Mammary epithelial cell (primary cell): ENCODE measurements at regions of chr14 and their contacts with region 1.

Region 1: GRCh38 chr14:35229495-35230089 is 62.6 kb upstream of the PSMA6 start:
- DNase-seq: no peak
- H3K4me3 ChIP-seq: no peak overlapping the region
- H3K27ac ChIP-seq: no peak overlapping the region
- H3K4me1 ChIP-seq: peaks cover 5% of the 10 kb centered on the region
- H3K27me3 ChIP-seq: no peaks in the 10 kb centered on the region
- CTCF ChIP-seq: peak; percentile 12 to 34

Region 2: DNA sequence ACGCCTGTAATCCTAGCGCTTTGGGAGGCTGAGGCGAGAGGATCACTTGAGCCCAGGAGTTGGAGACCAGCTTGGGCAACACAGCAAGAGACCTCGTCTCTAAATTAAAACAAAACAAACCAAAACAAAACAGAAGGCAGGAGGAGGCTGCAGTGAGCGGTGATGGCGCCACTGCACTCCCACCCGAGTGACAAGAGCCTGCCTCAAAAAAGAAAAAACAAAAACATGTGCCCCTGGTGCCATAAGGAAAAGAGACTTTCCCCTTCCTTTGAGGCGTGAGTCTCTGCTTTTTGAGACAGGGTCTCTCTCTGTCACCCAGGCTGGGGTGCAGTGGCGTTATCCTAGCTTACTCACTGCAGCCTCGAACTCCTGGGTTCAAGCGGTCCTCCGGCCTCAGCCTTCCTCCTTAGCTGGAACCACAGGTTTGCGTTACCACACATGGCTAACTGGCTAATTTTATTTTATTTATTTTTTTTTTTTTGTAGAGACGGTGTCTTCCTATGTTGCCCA is 681.1 kb before region 1 on chr14:
- CTCF ChIA-PET with region 1: interaction called, 14 read pairs
- dilution Hi-C with region 1: no loop called
- in situ Hi-C with region 1: no loop called
- intact Hi-C with region 1: no loop called
- DNase-seq: peak; percentile 76
- H3K4me3 ChIP-seq: no peak overlapping the region
- H3K27ac ChIP-seq: no peak overlapping the region
- H3K4me1 ChIP-seq: no peaks in the 10 kb centered on the region
- H3K27me3 ChIP-seq: no peaks in the 10 kb centered on the region
- CTCF ChIP-seq: no peak

Region 3: DNA sequence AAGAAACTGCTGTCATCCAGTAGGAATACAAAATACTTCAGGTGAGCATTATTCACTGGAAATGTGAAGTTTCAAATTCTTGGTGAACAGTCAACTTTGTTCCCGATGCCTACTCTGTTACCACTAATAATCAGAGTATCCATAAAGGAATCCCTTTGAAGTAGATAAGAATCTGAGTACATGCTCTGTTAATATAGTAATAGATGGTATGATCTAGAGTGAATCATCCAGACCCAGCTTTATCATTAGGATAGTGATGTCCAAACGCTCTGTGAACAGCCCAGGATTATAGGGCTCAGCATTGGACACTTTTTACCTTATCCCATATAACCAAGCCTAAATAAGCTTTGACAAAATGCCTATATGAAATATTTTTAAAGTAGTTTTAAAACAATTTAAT is 141.1 kb before region 1 on chr14:
- CTCF ChIA-PET with region 1: interaction called, 10 read pairs
- dilution Hi-C with region 1: no loop called
- in situ Hi-C with region 1: no loop called
- intact Hi-C with region 1: no loop called
- DNase-seq: peak; percentile 11
- H3K4me3 ChIP-seq: no peak overlapping the region
- H3K27ac ChIP-seq: no peak overlapping the region
- H3K4me1 ChIP-seq: no peaks in the 10 kb centered on the region
- H3K27me3 ChIP-seq: no peaks in the 10 kb centered on the region
- CTCF ChIP-seq: no peak

Region 4: GRCh38 chr14:35114034-35114433 is 115.6 kb before region 1 on chr14:
- CTCF ChIA-PET with region 1: no interaction called
- dilution Hi-C with region 1: no loop called
- in situ Hi-C with region 1: no loop called
- intact Hi-C with region 1: no loop called
- DNase-seq: no peak
- H3K4me3 ChIP-seq: no peak overlapping the region
- H3K27ac ChIP-seq: no peak overlapping the region
- H3K4me1 ChIP-seq: no peaks in the 10 kb centered on the region
- H3K27me3 ChIP-seq: no peaks in the 10 kb centered on the region
- CTCF ChIP-seq: no peak